Panc1 (cell line): ENCODE measurements at regions of chr6 and their contacts with region 1.

Region 1: DNA sequence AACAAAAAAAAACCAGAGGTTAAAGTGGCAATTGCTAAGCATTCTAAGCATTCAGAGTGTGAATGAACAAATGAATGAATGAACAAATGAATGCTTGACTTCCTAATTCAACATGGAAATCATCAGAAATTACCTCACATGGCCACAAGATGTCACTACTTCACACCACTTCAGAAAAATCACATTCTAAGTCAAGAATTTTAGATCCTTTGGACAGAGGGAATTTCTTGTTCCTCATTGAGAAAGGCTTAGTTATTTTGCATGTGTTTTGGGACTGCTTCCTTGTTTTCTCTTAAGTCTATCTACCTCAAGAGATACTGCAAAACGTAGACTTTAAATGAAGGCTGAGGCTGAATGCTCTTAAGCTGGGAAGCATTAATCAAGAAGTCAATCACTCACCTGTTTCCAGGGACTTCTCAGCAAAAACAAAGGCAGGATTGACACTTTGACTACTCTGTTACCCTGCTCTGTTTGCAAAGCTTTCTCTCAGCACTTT is 120.2 kb downstream of the MBOAT1 start:
- DNase-seq: peak; percentile 30
- ATAC-seq: no peak
- H3K4me3 ChIP-seq: no peak overlapping the region
- H3K27ac ChIP-seq: no peak overlapping the region
- H3K4me1 ChIP-seq: no peaks in the 10 kb centered on the region
- H3K27me3 ChIP-seq: no peaks in the 10 kb centered on the region
- CTCF ChIP-seq: peak; percentile 73

Region 2: GRCh38 chr6:20126789-20127653 is 34.9 kb after region 1 on chr6:
- CTCF ChIA-PET with region 1: interaction called, 8 read pairs
- POLR2A ChIA-PET with region 1: no interaction called
- in situ Hi-C with region 1: no loop called
- intact Hi-C with region 1: loop called (anchors 1 kb)
- DNase-seq: peak; percentile 42
- ATAC-seq: peak; percentile 95
- H3K4me3 ChIP-seq: no peak overlapping the region
- H3K27ac ChIP-seq: no peak overlapping the region
- H3K4me1 ChIP-seq: no peaks in the 10 kb centered on the region
- H3K27me3 ChIP-seq: no peaks in the 10 kb centered on the region
- CTCF ChIP-seq: peak; percentile 98

Region 3: GRCh38 chr6:20291764-20292580 is 199.9 kb after region 1 on chr6:
- CTCF ChIA-PET with region 1: no interaction called
- POLR2A ChIA-PET with region 1: interaction called, 3 read pairs
- in situ Hi-C with region 1: no loop called
- intact Hi-C with region 1: loop called (anchors 5 kb)
- DNase-seq: peak; percentile 85
- ATAC-seq: peak; percentile 99
- H3K4me3 ChIP-seq: no peak overlapping the region
- H3K27ac ChIP-seq: no peak overlapping the region
- H3K4me1 ChIP-seq: no peaks in the 10 kb centered on the region
- H3K27me3 ChIP-seq: no peaks in the 10 kb centered on the region
- CTCF ChIP-seq: peak; percentile 91

Region 4: DNA sequence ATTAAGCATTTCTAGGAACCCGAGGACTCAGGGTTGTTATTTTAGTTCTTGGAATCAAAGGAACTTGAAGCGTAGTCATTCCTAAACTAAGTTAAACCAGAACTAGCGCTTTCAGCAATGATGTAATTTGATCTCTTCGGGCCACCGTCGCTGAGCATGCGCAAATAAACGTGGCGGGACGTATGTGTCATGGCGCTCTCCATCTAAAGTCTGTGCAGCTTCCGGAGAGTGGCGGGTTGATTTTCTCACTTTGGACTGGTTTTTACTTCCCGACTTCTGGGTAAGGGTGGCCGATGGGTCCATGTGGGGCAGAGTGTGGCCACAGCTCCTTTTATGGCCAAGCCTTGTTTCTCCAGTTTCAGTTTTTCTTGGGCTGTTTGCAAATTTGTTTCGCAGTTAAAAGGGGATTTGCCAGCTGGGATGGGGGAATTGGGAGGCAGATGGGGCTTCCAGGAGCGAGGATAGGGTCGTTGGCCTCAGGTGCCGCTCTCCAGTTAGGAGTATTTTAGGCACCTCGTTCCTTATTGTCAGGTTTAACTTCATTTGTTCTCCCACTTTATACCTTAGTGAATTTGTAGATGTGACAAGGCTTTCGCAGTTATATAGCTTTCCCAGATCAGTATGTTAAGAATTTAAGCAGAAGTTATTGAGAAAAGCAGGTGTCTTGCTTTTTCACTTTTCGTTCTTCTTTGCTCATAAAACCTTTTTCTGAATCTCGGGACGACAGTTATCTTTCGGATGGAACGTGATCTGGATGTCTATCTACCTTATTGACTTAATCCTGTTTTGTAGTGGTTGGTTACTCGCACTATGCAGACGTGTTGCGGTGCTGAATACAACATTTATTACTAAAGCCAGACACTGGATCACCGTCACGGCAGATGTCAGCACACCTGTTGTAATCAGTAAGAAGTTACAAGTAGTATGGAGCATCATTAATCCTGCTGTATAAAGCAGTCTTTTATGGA is 442.5 kb after region 1 on chr6 and contains the start of gene CDKAL1:
- CTCF ChIA-PET with region 1: no interaction called
- POLR2A ChIA-PET with region 1: no interaction called
- in situ Hi-C with region 1: no loop called
- intact Hi-C with region 1: loop called (anchors 5 kb)
- DNase-seq: peak; percentile 73
- ATAC-seq: peak; percentile 94
- H3K4me3 ChIP-seq: peak within 1 kb of the TSS; percentile 94 to 95
- H3K27ac ChIP-seq: peak within 1 kb of the TSS; percentile 95
- H3K4me1 ChIP-seq: peaks cover 8% of the 10 kb centered on the region
- H3K27me3 ChIP-seq: no peaks in the 10 kb centered on the region
- CTCF ChIP-seq: no peak
- total RNA-seq, gene CDKAL1: 14.5 TPM

Region 5: GRCh38 chr6:20906938-20907337 is 814.8 kb after region 1 on chr6:
- CTCF ChIA-PET with region 1: no interaction called
- POLR2A ChIA-PET with region 1: no interaction called
- in situ Hi-C with region 1: no loop called
- intact Hi-C with region 1: no loop called
- DNase-seq: no peak
- ATAC-seq: no peak
- H3K4me3 ChIP-seq: no peak overlapping the region
- H3K27ac ChIP-seq: no peak overlapping the region
- H3K4me1 ChIP-seq: no peaks in the 10 kb centered on the region; the same call in 1 of the 2 replicates
- H3K27me3 ChIP-seq: no peaks in the 10 kb centered on the region
- CTCF ChIP-seq: no peak